ENCODE measurements at regions of chr1 and their contacts with region 1.

Region 1: DNA sequence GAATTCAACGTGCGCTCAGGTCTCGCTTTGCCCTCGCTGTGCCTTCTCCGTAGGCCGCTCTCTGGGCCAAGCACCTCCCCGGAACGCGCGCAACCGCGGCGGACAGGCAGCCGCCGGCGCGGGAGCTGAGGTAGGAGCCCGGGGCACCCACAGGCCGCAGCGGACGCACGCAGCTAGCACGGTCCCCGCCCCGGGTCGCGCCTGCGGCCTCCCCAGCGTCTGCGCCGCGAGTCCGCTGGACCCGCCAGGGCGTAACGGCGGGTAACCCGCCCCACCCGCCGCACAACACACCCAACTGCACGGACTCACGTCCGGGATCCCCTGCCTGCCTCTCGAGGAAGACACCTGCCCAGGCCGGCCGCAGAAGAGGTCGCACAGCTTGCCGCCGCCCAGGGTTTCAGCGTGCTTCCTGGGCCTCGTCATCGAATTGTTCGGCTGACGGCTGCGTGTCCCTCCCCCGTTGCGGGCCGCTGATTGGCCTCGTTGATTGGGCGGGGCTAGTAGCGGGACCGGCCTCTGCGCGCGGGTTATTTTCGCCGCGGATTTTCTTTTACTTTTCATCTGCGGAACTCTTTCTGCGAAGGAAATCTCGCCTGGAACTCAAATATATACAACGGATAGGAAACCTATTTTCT is at the start of gene CLCC1:
- DNase-seq: peak; percentile 97
- H3K4me3 ChIP-seq: peak within 1 kb of the TSS; percentile 57 to 86 (median 74)
- H3K27ac ChIP-seq: peak within 1 kb of the TSS; percentile 92 to 98 (median 98)
- H3K4me1 ChIP-seq: peaks cover 0 to 28% (median 19%) of the 10 kb centered on the region in 4 donors
- H3K27me3 ChIP-seq: no peaks in the 10 kb centered on the region
- CTCF ChIP-seq: no peak
- EP300 ChIP-seq: no peak
- POLR2A ChIP-seq: peak; percentile 71 to 75
- total RNA-seq, gene CLCC1: 19.1 to 24.3 (median 20.3) TPM

Region 2: DNA sequence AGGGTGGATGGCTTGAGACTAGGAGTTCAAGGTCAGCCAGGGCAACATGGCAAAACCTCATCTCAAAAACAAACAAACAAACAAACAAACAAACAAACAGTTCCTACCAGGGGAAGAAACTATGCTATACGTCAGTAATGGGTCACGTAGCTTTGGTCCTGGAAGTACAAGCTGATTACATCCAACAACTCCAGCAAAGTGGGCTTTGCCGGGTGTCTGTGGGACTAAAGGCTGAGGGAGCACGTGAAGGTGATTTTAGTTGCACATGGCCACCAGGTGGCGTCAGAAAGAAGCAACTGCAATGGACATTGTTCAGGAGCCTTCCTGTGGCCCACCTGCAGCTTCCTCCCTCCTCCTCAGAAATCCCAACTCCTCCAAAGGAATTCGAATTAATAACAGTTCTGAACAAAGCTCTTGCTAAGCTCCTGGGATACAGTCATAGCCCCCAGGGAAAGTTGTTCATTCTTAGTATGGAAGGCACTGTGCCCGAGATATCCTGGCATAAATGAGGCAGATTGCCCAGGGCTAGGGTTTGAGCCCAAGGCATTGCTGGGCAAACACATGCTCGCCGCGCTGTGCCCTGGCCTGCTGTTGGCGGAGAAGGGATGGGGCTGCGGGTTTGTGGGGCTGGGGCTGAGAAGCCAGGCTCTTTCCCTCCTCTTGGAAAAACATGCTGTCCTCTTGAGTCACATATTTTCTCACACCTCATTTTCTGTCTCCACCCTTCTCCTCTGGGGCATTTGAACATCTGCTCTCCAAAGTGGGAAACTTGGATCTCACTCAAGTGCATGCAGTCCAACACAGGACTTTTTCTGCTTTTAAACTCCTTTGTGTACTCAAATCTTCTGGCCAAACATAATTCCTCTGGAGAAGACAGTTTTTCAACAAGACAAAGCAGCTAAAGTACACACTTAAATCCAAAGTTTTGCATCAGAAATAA is 134.9 kb before region 1 on chr1:
- intact Hi-C with region 1: loop called (anchors 5 kb)
- DNase-seq: peak; percentile 93
- H3K4me3 ChIP-seq: no peak overlapping the region
- H3K27ac ChIP-seq: peak overlapping the region; percentile 78 to 89 (median 84)
- H3K4me1 ChIP-seq: peaks cover 0 to 46% (median 40%) of the 10 kb centered on the region in 4 donors
- H3K27me3 ChIP-seq: no peaks in the 10 kb centered on the region
- CTCF ChIP-seq: peak; percentile 62 to 86 (median 76)
- EP300 ChIP-seq: no peak
- POLR2A ChIP-seq: no peak

Region 3: GRCh38 chr1:108871050-108871724 is 92.0 kb before region 1 on chr1:
- intact Hi-C with region 1: no loop called
- DNase-seq: no peak
- H3K4me3 ChIP-seq: no peak overlapping the region
- H3K27ac ChIP-seq: no peak overlapping the region
- H3K4me1 ChIP-seq: no peaks in the 10 kb centered on the region
- H3K27me3 ChIP-seq: no peaks in the 10 kb centered on the region
- CTCF ChIP-seq: no peak
- EP300 ChIP-seq: no peak
- POLR2A ChIP-seq: no peak

Region 4: DNA sequence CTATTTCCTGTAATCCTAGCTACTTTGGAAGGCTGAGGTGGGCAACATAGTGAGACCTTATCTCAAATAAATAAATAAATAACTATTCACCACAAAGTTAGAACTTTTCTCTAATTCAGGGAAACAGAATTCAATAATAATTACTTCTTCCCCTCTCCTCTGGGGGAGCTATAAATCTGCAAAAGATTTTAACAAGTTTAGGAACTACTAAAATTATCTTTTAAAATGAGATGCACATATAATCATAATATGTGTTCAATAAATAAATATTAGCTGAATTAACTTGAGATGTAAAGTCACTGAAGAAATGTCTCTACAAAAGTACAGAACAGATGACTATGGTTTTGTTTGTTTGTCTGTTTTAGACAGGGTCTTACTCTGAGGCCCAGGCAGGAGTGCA is 64.7 kb after region 1 on chr1:
- intact Hi-C with region 1: no loop called
- DNase-seq: no peak
- H3K4me3 ChIP-seq: no peak overlapping the region
- H3K27ac ChIP-seq: no peak overlapping the region
- H3K4me1 ChIP-seq: peaks cover 0 to 4% (median 0%) of the 10 kb centered on the region in 4 donors
- H3K27me3 ChIP-seq: no peaks in the 10 kb centered on the region
- CTCF ChIP-seq: no peak
- EP300 ChIP-seq: no peak
- POLR2A ChIP-seq: no peak

Region 5: DNA sequence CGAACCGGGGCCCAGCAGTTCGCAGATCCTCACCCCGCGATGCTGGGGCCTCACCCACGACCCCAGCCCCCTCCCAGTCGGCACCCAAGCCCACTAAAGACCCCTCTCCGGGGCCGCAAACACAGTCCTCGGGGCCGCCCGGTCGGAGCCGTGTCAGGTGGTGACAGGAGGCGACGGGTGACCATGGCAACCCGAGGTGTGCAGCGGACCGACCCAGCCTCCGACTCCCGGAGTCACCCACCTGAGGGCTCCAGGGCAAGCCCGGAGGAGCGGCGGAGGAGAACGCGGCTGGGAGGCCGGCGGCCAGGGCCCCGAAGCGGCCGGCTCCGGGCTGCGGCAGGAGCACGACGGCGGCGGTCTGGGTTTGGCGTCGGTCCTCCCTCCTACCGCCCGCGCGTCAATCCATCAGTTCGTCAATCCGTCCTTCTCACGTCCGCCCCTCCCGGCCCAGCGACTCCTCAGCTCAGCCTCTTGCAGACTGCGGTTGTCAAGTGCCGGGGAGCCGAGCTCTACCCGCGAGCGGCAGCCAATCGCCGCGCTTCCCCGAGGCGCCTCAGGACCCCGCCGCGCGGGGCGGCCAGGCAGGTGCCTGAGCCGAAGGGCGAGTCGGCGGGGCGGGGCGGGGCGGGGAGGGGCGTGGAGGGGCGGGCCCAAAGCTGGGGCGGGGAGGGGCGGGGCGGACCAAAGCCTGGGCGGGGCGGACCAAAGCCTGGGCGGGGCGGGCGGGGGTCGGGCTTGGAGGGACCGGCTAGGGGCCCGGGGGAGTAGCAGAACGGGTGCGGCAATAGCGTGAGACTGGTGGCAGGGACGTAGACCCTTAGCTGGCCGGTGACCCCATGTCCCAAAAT is 78.7 kb after region 1 on chr1 and contains the start of gene WDR47:
- intact Hi-C with region 1: loop called (anchors 5 kb)
- DNase-seq: peak; percentile 97
- H3K4me3 ChIP-seq: peak within 1 kb of the TSS; percentile 81 to 100 (median 99)
- H3K27ac ChIP-seq: peak within 1 kb of the TSS; percentile 87 to 93 (median 91)
- H3K4me1 ChIP-seq: peaks cover 0 to 18% (median 13%) of the 10 kb centered on the region in 4 donors
- H3K27me3 ChIP-seq: no peaks in the 10 kb centered on the region
- CTCF ChIP-seq: no peak
- EP300 ChIP-seq: no peak
- POLR2A ChIP-seq: peak; percentile 85 to 91
- total RNA-seq, gene WDR47: 16.0 to 34.3 (median 24.0) TPM

Region 6: GRCh38 chr1:109090196-109091077 is 127.3 kb after region 1 on chr1 and contains the start of gene TMEM167B:
- intact Hi-C with region 1: loop called (anchors 5 kb)
- DNase-seq: peak; percentile 96
- H3K4me3 ChIP-seq: peak within 1 kb of the TSS; percentile 70 to 88 (median 78)
- H3K27ac ChIP-seq: peak within 1 kb of the TSS; percentile 93 to 97 (median 96)
- H3K4me1 ChIP-seq: peaks cover 0 to 55% (median 42%) of the 10 kb centered on the region in 4 donors
- H3K27me3 ChIP-seq: no peaks in the 10 kb centered on the region
- CTCF ChIP-seq: no peak
- EP300 ChIP-seq: peak in 2 of 4 donors; percentile 3 to 24
- POLR2A ChIP-seq: peak; percentile 56 to 82
- total RNA-seq, gene TMEM167B: 21.9 to 33.2 (median 26.8) TPM

Measured in sigmoid colon (tissue), 7 donors.